Panc1 (cell line): ENCODE measurements at regions of chr1 and their contacts with region 1.

Region 1: DNA sequence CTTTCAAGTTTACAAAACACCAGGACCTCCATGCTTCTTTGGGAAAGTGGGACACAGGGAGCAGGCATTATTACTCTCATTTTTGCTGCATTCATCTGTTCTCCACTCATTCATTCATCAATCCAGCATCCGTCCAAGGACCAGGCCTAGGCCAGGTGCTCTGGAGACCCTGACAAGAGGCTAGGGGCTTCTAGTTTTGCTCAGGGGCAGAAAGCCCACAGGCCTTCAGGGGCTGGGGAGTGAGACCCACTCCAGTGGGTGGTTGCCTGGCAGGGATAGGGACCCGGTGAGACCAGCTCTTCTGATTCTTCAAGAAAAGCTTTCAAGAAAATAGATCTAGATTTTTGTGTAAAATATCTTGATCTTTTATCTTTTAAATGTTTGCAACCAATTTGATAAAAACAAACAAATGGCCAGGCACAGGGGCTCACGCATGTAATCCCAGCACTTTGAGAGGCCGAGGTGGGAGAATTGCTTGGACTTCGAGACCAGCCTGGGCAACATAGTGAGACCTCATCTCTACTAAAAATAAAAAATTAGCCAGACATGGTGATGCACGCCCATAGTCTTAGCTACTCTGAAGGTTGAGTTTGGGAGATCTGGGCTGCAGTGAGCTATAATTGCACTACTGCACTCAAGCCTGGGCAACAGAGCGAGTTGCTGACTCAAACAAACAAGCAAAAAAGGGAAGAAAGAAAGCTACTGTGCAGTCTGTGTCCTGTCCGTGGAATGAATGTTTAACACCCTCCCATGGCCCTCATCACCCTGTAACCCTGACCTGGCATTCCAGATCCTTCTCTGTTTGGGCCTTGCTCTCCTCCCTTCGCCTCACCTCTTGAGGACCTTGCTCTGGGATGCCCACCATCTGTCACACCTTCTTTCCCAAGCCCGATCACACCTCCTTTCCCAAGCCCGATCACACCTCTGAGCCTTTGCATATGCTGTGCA is 17.3 kb upstream of the LRP8 start:
- DNase-seq: no peak
- ATAC-seq: no peak
- H3K4me3 ChIP-seq: no peak overlapping the region
- H3K27ac ChIP-seq: no peak overlapping the region
- H3K4me1 ChIP-seq: no peaks in the 10 kb centered on the region
- H3K27me3 ChIP-seq: no peaks in the 10 kb centered on the region
- CTCF ChIP-seq: no peak

Region 2: GRCh38 chr1:53377438-53377841 is 32.3 kb after region 1 on chr1:
- CTCF ChIA-PET with region 1: no interaction called
- POLR2A ChIA-PET with region 1: interaction called, 10 read pairs
- in situ Hi-C with region 1: no loop called
- intact Hi-C with region 1: no loop called
- DNase-seq: no peak
- ATAC-seq: no peak
- H3K4me3 ChIP-seq: no peak overlapping the region
- H3K27ac ChIP-seq: no peak overlapping the region
- H3K4me1 ChIP-seq: no peaks in the 10 kb centered on the region; the same call in 1 of the 2 replicates
- H3K27me3 ChIP-seq: no peaks in the 10 kb centered on the region
- CTCF ChIP-seq: no peak